PC-9 (cell line): ENCODE measurements at regions of chr16 and their contacts with region 1.

Region 1: GRCh38 chr16:67892899-67893742 is at the start of gene PSKH1:
- DNase-seq: peak; percentile 88 to 91
- H3K4me3 ChIP-seq: peak within 1 kb of the TSS; percentile 98
- H3K27ac ChIP-seq: peak within 1 kb of the TSS; percentile 31
- H3K4me1 ChIP-seq: peaks cover 14% of the 10 kb centered on the region
- H3K27me3 ChIP-seq: no peaks in the 10 kb centered on the region
- CTCF ChIP-seq: no peak
- total RNA-seq, gene PSKH1: 25.8 and 28.4 TPM in 2 replicates

Region 2: DNA sequence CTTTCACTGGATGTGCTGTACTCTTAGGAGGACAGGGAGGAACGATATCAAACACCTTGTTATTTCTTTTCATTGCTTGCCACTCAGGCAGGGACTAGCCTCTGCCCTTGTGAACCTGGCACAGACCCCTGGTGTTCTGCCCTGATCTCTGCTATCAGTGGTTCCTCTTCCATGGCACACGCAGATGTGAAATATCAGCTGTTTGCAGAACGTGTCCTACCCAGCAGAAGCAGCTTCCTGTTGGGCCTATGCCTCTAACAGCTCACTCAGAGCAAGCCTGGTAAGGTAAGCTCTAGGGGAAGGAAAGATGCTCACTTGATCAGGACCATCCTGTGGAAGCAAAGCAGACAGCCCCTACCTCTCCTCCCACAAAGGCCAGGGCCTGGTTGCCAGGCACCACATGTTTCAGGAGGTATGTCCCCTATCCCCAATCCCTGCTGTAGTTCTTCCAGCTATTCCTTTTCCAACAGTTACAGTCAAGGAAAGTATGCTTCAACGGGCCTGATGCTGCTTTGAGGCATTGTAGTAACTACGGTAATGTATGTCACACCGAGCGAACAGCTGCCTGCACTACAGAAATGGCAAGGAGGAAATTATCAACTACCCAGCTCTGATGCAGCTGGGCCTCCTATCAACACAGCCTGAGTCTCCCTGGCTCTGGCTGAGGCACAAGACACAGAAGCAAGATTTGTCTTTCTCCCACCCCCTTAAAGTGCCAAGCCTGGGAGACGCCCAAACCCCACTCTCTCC is 132.7 kb before region 1 on chr16:
- CTCF ChIA-PET with region 1: no interaction called
- POLR2A ChIA-PET with region 1: no interaction called
- intact Hi-C with region 1: no loop called
- DNase-seq: no peak
- H3K4me3 ChIP-seq: no peak overlapping the region
- H3K27ac ChIP-seq: no peak overlapping the region
- H3K4me1 ChIP-seq: no peaks in the 10 kb centered on the region
- H3K27me3 ChIP-seq: no peaks in the 10 kb centered on the region
- CTCF ChIP-seq: no peak

Region 3: GRCh38 chr16:67878232-67878631 is 14.9 kb before region 1 on chr16:
- CTCF ChIA-PET with region 1: interaction called, 7 read pairs
- POLR2A ChIA-PET with region 1: interaction called, 20 read pairs
- intact Hi-C with region 1: no loop called
- DNase-seq: no peak
- H3K4me3 ChIP-seq: no peak overlapping the region
- H3K27ac ChIP-seq: no peak overlapping the region
- H3K4me1 ChIP-seq: peaks cover 11% of the 10 kb centered on the region; the same call in 1 of the 2 replicates
- H3K27me3 ChIP-seq: no peaks in the 10 kb centered on the region
- CTCF ChIP-seq: no peak

Region 4: DNA sequence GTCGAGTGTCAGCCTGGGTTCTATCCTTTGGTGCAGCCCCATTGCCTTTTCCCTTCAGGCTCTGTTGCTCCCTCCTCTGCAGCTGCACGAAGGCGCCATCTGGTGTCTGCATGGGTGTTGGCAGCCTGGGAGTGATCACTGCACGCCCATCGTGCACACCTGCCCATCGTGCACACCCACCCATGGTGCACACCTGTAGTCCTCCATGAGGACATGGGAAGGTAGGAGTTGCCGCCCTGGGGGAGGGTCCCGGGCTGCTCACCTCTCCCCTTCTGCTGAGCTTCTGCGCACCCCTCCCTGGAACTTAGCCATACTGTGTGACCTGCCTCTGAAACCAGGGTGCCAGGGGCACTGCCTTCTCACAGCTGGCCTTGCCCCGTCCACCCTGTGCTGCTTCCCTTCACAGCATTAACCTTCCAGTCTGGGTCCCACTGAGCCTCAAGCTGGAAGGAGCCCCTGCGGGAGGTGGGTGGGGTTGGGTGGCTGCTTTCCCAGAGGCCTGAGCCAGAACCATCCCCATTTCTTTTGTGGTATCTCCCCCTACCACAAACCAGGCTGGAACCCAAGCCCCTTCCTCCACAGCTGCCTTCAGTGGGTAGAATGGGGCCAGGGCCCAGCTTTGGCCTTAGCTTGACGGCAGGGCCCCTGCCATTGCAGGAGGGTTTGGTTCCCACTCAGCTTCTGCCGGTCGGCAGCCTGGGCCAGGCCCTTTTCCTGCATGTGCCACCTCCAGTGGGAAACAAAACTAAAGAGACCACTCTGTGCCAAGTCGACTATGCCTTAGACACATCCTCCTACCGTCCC is 35.6 kb after region 1 on chr16:
- CTCF ChIA-PET with region 1: no interaction called
- POLR2A ChIA-PET with region 1: no interaction called
- intact Hi-C with region 1: loop called (anchors 5 kb)
- DNase-seq: peak in 1 of 2 experiments; percentile 64
- H3K4me3 ChIP-seq: no peak overlapping the region
- H3K27ac ChIP-seq: no peak overlapping the region
- H3K4me1 ChIP-seq: no peaks in the 10 kb centered on the region
- H3K27me3 ChIP-seq: no peaks in the 10 kb centered on the region
- CTCF ChIP-seq: peak; percentile 90